ENCODE measurements at regions of chr19 and their contacts with region 1.

Region 1: DNA sequence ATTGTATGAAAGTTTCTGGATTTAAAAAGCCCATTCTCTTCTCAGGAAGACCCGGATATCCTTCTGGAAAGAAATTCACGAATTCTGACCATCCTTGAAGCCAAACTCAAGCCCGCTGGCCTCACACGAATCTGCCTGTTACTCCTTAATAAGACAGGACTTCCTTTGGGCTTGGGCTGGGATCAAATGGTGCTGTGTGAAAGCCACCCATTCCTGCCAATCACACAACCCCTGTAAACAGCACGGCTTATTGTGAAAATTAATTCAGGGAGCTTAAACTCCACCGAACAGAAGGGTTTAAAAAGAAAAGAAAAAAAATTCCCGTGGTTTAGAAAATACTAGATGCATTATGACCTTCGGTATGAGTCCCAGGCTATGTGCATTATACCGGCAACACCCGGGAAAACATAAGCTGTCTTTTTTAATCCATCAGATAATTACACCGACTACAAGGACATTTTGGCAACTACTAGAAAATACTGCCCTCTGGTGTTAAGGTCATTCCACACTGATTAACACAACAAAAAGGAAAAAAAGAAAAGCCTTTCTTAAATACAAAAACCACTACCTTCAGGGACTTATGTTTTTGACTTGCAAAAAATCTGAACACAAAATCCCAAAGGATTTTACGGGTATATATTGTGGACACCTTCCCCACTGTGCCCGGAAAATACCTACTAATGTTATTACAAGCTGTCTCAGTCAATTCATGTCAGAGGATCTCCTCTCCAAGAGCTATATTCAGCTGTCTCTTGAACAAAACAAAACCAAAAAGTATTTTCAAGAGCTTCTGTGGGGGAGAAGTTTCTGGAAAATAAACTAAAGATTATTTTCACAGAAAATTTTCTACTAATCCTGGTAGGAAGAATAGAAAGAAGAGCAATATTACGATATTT is 76.0 kb upstream of the LSM14A start:
- DNase-seq: peak; percentile 50

Region 2: GRCh38 chr19:33778089-33778791 is 318.0 kb before region 1 on chr19:
- CTCF ChIA-PET with region 1: interaction called, 41 read pairs
- POLR2A ChIA-PET with region 1: no interaction called
- DNase-seq: peak; percentile 96

Region 3: DNA sequence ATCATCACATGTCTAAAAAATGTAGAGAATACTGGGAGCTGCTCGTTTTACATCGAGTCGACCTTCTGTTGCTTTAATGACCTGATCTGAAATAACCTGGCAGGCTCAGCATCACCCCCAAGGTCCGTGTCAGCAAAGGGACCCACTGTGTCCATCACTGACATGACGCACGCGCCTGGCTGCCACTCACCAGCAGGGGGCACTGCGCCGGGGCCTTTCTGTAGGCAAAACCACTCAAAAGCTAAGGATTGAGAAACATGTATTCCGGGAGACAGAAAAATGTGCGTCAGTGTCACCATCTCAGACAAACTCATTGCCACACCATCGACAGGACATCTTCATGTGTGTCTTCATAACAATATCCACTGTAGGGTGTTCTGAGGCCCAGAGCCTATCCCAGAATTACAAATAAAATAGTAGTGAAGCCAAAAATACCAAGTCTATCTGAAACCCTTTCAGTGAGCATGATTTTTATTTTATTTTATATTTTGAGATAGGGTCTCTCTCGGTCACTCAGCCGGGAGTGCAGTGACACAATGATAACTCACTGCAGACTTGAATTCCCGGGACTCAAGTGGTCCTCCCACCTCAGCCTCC is 54.2 kb before region 1 on chr19:
- CTCF ChIA-PET with region 1: interaction called, 13 read pairs
- POLR2A ChIA-PET with region 1: interaction called, 4 read pairs
- DNase-seq: peak; percentile 75

Measured in HEK293T (cell line).